ENCODE measurements at regions of chr2 and their contacts with region 1.

Region 1: DNA sequence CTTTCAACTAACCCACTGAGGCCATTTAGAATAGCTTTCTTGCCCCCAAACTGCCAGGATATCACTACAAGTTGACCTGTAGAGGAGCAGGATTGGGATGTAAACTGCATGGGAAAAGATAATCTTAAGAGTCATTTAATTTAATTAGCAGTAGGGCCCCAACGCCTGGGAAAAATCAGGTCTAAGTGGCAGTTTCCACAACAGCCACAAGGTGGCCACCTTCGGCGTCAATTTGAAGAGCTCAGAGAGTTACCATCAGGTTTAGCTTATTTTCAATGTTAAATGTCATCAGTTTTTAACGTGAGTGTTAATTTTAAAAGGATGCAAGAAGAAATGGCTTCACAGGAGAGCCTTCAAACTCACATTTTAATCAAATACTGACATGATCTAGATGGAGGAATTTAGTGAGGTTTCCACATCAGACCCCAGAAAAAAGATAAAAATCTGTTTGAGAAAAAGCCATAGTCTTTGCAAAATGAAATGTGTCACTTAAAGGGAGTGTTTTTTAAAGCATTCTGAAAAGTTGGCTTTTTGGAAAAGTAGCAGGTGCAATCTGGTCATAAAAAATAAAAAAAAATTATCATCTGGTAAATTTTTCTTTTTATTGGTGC is 77.3 kb upstream of the UPP2 start:
- DNase-seq: peak in 32 of 35 experiments; percentile 4 to 67 (median 34)
- ATAC-seq: peak in 3 of 4 experiments; percentile 50 to 64 (median 58)
- H3K4me3 ChIP-seq: no peak overlapping the region
- H3K4me3 Mint-ChIP-seq: no peak overlapping the region
- H3K27ac ChIP-seq: no peak overlapping the region
- H3K27ac Mint-ChIP-seq: no peak overlapping the region
- H3K4me1 ChIP-seq: peaks cover 0 to 5% of the 10 kb centered on the region in 2 experiments
- H3K4me1 Mint-ChIP-seq: peaks cover 9 to 11% (median 10%) of the 10 kb centered on the region in 3 donors
- H3K27me3 ChIP-seq: peaks cover 0 to 3% of the 10 kb centered on the region in 2 experiments
- H3K27me3 Mint-ChIP-seq: peaks cover 0 to 6% of the 10 kb centered on the region in 2 donors

Region 2: GRCh38 chr2:157995117-157995516 is 29.3 kb before region 1 on chr2:
- CTCF ChIA-PET with region 1: interaction called, 3 to 10 read pairs
- POLR2A ChIA-PET with region 1: no interaction called
- DNase-seq: no peak
- ATAC-seq: no peak
- H3K4me3 ChIP-seq: no peak overlapping the region
- H3K4me3 Mint-ChIP-seq: no peak overlapping the region
- H3K27ac ChIP-seq: no peak overlapping the region
- H3K27ac Mint-ChIP-seq: no peak overlapping the region
- H3K4me1 ChIP-seq: no peaks in the 10 kb centered on the region
- H3K4me1 Mint-ChIP-seq: no peaks in the 10 kb centered on the region
- H3K27me3 ChIP-seq: no peaks in the 10 kb centered on the region
- H3K27me3 Mint-ChIP-seq: peaks cover 0 to 3% of the 10 kb centered on the region in 2 donors

Region 3: GRCh38 chr2:158006961-158007719 is 17.3 kb before region 1 on chr2:
- CTCF ChIA-PET with region 1: interaction called in 1 of 2 experiments, 13 read pairs
- POLR2A ChIA-PET with region 1: no interaction called
- DNase-seq: peak in 6 of 35 experiments; percentile 3 to 16 (median 6)
- ATAC-seq: peak in 1 of 4 experiments; percentile 64
- H3K4me3 ChIP-seq: no peak overlapping the region
- H3K4me3 Mint-ChIP-seq: no peak overlapping the region
- H3K27ac ChIP-seq: no peak overlapping the region
- H3K27ac Mint-ChIP-seq: no peak overlapping the region
- H3K4me1 ChIP-seq: no peaks in the 10 kb centered on the region
- H3K4me1 Mint-ChIP-seq: peaks cover 0 to 6% (median 4%) of the 10 kb centered on the region in 3 donors
- H3K27me3 ChIP-seq: no peaks in the 10 kb centered on the region
- H3K27me3 Mint-ChIP-seq: peaks cover 0 to 1% of the 10 kb centered on the region in 2 donors

Region 4: DNA sequence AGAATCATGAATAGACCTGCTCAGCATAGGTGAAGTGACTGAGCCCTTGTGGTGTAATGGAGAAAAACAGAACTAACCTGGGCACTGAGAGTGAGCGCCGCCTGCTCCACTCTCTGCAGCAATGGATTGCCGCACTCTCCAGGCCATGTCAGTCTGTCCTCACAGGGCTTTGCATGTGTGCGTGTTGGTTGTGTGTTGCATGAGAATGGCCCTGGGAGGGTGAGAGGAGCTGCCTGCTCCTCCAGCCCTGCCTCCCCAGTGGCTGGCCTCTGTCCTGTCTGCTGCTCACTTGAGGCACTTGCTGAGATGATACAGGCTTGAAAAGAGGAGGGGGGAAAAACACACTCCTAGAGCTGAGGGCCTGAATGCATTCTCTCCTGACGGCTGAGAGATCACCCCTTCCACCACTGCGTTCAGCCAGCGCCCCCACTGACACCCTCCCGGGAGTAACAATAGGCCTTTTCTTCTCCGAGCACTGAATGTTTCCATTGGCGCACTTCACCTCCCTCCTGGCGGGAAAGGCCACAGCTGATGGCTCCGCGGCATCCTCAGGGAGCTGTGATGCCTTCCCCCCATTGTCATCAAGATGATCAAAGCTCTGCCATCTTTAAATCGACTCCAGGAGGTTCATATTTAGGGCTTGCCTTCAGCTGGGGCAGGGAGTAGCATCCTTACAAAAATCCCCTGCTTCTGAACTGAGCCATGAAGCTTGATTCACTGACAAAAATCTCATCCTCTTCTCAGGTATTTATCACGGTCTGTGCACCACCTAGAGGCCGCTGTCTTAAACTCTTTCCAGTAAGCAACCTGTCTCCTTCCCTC is 720.9 kb after region 1 on chr2:
- CTCF ChIA-PET with region 1: interaction called, 17 to 57 read pairs
- POLR2A ChIA-PET with region 1: no interaction called
- DNase-seq: peak in 27 of 35 experiments; percentile 7 to 53 (median 27)
- ATAC-seq: peak in 3 of 4 experiments; percentile 26 to 45 (median 43)
- H3K4me3 ChIP-seq: no peak overlapping the region
- H3K4me3 Mint-ChIP-seq: no peak overlapping the region
- H3K27ac ChIP-seq: no peak overlapping the region
- H3K27ac Mint-ChIP-seq: no peak overlapping the region
- H3K4me1 ChIP-seq: no peaks in the 10 kb centered on the region
- H3K4me1 Mint-ChIP-seq: no peaks in the 10 kb centered on the region
- H3K27me3 ChIP-seq: peaks cover 0 to 8% of the 10 kb centered on the region in 2 experiments
- H3K27me3 Mint-ChIP-seq: peaks cover 19 to 30% of the 10 kb centered on the region in 2 donors

Region 5: GRCh38 chr2:158753641-158754611 is 729.5 kb after region 1 on chr2:
- CTCF ChIA-PET with region 1: interaction called, 38 to 40 read pairs
- POLR2A ChIA-PET with region 1: no interaction called
- DNase-seq: peak in 12 of 35 experiments; percentile 2 to 63 (median 12)
- ATAC-seq: peak in 3 of 4 experiments; percentile 52 to 68 (median 54)
- H3K4me3 ChIP-seq: no peak overlapping the region
- H3K4me3 Mint-ChIP-seq: no peak overlapping the region
- H3K27ac ChIP-seq: no peak overlapping the region
- H3K27ac Mint-ChIP-seq: no peak overlapping the region
- H3K4me1 ChIP-seq: no peaks in the 10 kb centered on the region
- H3K4me1 Mint-ChIP-seq: no peaks in the 10 kb centered on the region
- H3K27me3 ChIP-seq: peaks cover 0 to 12% of the 10 kb centered on the region in 2 experiments
- H3K27me3 Mint-ChIP-seq: peaks cover 12 to 13% of the 10 kb centered on the region in 2 donors

Measured in T-cell (primary cell).